Activated CD4-positive, alpha-beta memory T cell treated with anti-CD3 and anti-CD28 coated beads, Interleukin-2, amount 10 ng/mL, durations not matched to agents 7 days and 5 days (primary cell): ENCODE measurements at regions of chr13 and their contacts with region 1.

Region 1: GRCh38 chr13:30158774-30159445 is 148.4 kb downstream of the KATNAL1 start:
- DNase-seq: peak; percentile 36
- H3K4me3 Mint-ChIP-seq: no peak overlapping the region
- H3K27ac Mint-ChIP-seq: no peak overlapping the region
- H3K4me1 Mint-ChIP-seq: peaks cover 54% of the 10 kb centered on the region
- H3K27me3 Mint-ChIP-seq: peaks cover 2% of the 10 kb centered on the region

Region 2: GRCh38 chr13:30142486-30143211 is 16.3 kb before region 1 on chr13:
- CTCF ChIA-PET with region 1: interaction called, 39 read pairs
- POLR2A ChIA-PET with region 1: interaction called, 16 read pairs
- DNase-seq: peak; percentile 53
- H3K4me3 Mint-ChIP-seq: no peak overlapping the region
- H3K27ac Mint-ChIP-seq: peak overlapping the region; percentile 71
- H3K4me1 Mint-ChIP-seq: peaks cover 62% of the 10 kb centered on the region
- H3K27me3 Mint-ChIP-seq: no peaks in the 10 kb centered on the region

Region 3: DNA sequence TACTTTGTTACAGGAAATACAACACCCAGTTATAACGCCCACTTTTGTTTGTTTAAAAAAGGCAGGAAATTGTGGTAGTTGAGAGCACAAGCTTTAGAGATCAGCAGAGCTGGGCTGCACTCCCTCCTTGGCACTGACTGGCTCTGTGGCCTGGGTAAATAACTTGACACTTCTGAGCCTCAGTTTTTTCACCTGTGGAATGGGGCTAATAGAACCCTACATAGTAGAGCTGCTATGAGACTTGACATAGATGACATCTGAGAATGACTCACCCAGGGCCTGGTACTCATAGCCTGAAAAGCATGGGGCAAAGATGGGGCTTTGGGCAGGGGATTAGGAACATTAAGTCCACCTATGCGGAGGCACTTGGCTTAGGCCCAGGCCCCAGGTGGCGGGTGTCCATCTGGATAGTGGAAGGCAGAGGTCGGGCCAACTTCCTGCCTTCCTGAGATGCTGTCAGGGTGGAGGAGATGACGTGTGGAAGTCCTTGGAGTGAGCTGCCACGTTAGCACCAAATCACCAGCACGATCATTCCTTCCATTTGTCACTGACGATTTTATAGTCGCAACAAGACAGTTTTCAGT is 10.6 kb before region 1 on chr13:
- CTCF ChIA-PET with region 1: interaction called, 39 read pairs
- POLR2A ChIA-PET with region 1: interaction called, 16 read pairs
- DNase-seq: peak; percentile 75
- H3K4me3 Mint-ChIP-seq: peak overlapping the region; percentile 5
- H3K27ac Mint-ChIP-seq: peak overlapping the region; percentile 96
- H3K4me1 Mint-ChIP-seq: peaks cover 90% of the 10 kb centered on the region
- H3K27me3 Mint-ChIP-seq: no peaks in the 10 kb centered on the region